HEK293T (cell line): ENCODE measurements at regions of chr17 and their contacts with region 1.

Region 1: DNA sequence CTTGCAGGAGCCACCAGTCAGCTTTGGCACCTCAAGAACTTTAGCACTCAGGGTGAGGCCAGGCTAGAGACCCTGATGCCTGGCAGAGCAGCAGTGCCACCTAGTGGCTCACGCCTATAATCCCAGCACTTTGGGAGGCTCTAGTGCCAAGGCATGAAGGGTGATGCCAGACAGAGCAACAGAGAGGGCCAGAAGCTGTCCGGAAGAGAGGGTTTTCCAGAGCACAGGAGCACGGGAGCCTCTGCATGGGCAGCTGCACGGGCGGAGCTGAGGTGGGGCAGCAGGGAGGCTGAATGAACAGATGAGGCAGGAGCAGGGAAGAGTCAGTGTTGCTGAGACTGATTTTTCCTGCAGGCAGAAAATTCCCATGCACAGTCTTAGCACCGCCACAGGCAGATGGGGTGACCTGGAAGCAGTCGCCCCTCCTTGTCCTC is 38.9 kb downstream of the MYH3 start:
- DNase-seq: peak; percentile 69

Region 2: GRCh38 chr17:10295728-10296343 is 322.4 kb before region 1 on chr17:
- CTCF ChIA-PET with region 1: interaction called, 12 read pairs
- POLR2A ChIA-PET with region 1: no interaction called
- DNase-seq: peak; percentile 73

Region 3: DNA sequence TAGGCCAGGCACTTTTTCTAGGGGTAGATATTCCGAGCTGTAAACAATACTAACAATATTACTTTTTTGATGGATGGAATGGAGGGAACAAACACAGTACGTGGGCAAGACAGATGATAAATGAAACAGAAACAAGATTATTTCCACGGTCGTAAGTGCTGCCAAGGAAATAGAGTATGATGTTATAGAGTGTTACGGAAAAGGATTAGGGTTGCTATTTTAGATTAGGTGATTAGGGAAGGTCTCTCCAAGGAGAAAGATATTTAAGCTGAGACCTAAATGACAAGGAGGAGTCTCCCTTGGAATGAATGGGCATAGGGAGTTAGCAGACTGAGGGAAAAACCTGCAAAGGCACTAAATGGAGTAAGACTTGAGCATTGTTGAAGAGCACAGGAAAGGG is 87.5 kb after region 1 on chr17:
- CTCF ChIA-PET with region 1: no interaction called
- POLR2A ChIA-PET with region 1: no interaction called
- DNase-seq: no peak